Activated CD4-positive, alpha-beta memory T cell treated with anti-CD3 and anti-CD28 coated beads, Interleukin-2, amount 10 ng/mL, durations not matched to agents 7 days and 5 days (primary cell): ENCODE measurements at regions of chr6 and their contacts with region 1.

Region 1: GRCh38 chr6:35541836-35542235 is 29.1 kb upstream of the TULP1 start:
- DNase-seq: no peak
- H3K4me3 Mint-ChIP-seq: no peak overlapping the region
- H3K27ac Mint-ChIP-seq: no peak overlapping the region
- H3K4me1 Mint-ChIP-seq: no peaks in the 10 kb centered on the region
- H3K27me3 Mint-ChIP-seq: no peaks in the 10 kb centered on the region

Region 2: GRCh38 chr6:35522660-35523658 is 18.9 kb before region 1 on chr6:
- CTCF ChIA-PET with region 1: interaction called, 13 read pairs
- POLR2A ChIA-PET with region 1: no interaction called
- DNase-seq: peak; percentile 80
- H3K4me3 Mint-ChIP-seq: peak overlapping the region; percentile 55
- H3K27ac Mint-ChIP-seq: peak overlapping the region; percentile 72
- H3K4me1 Mint-ChIP-seq: peaks cover 22% of the 10 kb centered on the region
- H3K27me3 Mint-ChIP-seq: peaks cover 8% of the 10 kb centered on the region

Region 3: GRCh38 chr6:35552285-35552917 is 10.6 kb after region 1 on chr6:
- CTCF ChIA-PET with region 1: interaction called, 13 read pairs
- POLR2A ChIA-PET with region 1: interaction called, 4 read pairs
- DNase-seq: peak; percentile 76
- H3K4me3 Mint-ChIP-seq: no peak overlapping the region
- H3K27ac Mint-ChIP-seq: no peak overlapping the region
- H3K4me1 Mint-ChIP-seq: peaks cover 4% of the 10 kb centered on the region
- H3K27me3 Mint-ChIP-seq: peaks cover 14% of the 10 kb centered on the region

Region 4: GRCh38 chr6:35601331-35602132 is 59.7 kb after region 1 on chr6:
- CTCF ChIA-PET with region 1: no interaction called
- POLR2A ChIA-PET with region 1: no interaction called
- DNase-seq: peak; percentile 58
- H3K4me3 Mint-ChIP-seq: peak overlapping the region; percentile 60
- H3K27ac Mint-ChIP-seq: peak overlapping the region; percentile 91
- H3K4me1 Mint-ChIP-seq: peaks cover 48% of the 10 kb centered on the region
- H3K27me3 Mint-ChIP-seq: no peaks in the 10 kb centered on the region